ENCODE measurements at regions of chr1 and their contacts with region 1.

Region 1: DNA sequence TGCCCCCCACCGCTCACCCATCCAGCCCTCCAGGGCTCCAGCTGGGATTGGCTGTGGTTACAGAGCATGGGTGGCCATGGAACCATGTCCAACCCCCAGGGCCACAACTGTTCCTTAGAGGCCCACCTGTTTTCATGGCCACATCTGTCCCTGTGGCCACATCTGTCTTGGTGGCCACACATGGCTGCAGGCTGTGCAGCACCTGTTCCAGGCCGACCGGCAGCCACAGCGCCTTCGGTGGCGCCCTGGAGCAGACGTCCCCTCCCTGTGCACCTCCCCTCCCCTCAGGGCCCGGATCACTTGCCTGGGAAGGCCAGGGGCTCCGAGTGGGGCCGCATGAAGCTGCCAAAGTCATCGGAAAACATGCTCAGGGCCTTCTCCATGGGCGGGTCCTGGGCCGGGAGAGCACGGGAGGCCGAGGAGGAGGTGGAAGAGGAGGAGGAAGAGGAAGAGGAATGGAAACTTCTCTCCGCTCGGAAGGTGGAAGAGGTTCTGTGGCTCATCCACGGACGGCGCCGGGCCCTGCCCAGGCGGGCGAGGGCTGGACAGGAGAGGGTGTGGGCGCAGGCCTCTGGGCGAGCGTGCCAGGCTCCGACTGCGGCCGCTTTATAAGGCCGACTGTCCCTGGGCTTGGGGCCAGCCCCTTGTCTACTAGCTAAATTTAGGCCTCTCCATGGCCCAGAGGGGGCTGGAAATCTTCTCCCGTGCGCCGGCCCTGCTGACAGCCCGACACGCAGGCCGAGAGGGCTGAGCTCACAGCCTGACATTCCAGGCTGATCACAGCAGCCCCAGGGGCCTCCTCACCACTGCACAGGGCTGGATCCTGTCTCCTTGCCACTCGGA is at the start of gene HSPB7:
- DNase-seq: no peak
- H3K4me3 ChIP-seq: no peak within 1 kb of the TSS
- H3K27ac ChIP-seq: no peak within 1 kb of the TSS
- H3K4me1 ChIP-seq: no peaks in the 10 kb centered on the region
- H3K27me3 ChIP-seq: no peaks in the 10 kb centered on the region
- CTCF ChIP-seq: no peak
- total RNA-seq, gene HSPB7: not detected in 2 replicates

Region 2: GRCh38 chr1:15994590-15995351 is 22.9 kb before region 1 on chr1:
- CTCF ChIA-PET with region 1: interaction called, 12 read pairs
- POLR2A ChIA-PET with region 1: no interaction called
- intact Hi-C with region 1: no loop called
- DNase-seq: peak in 1 of 2 experiments; percentile 55
- H3K4me3 ChIP-seq: no peak overlapping the region
- H3K27ac ChIP-seq: no peak overlapping the region
- H3K4me1 ChIP-seq: no peaks in the 10 kb centered on the region
- H3K27me3 ChIP-seq: no peaks in the 10 kb centered on the region
- CTCF ChIP-seq: peak; percentile 68

Region 3: DNA sequence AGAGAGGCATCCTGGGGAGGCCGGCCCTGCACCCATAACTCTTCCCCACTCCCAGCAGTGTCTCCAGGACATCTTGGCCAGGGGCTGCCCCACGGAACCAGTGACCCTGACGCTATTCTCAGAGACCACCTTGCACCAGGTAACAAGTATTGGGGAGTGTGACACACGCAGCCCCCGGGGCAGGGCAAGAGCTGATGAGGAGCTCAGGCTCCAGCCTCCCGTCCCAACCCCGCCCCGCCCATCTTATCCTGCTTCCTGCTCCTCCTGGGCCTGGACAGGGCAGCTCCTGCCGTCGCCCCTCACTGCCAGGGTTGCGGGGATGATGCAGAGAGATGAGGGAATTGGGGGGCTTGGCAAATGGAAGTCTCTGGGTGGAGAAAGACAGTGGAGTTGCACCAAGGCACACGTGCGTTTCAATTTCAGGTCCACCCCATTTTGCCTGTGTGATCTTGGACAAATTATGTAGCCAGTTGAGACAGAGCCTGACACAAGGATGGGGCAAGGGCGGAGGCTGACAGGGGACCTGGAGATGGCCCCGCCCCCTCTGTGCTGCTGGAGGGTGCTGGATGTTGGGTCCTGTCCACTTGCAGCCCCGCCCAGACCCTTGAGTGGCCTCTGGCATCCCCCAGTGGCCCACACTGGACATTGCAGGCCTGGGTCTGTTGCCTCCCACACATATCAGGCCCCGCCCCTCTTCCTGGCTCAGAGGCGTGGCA is 14.9 kb after region 1 on chr1:
- CTCF ChIA-PET with region 1: no interaction called
- POLR2A ChIA-PET with region 1: no interaction called
- intact Hi-C with region 1: no loop called
- DNase-seq: peak; percentile 64 to 89
- H3K4me3 ChIP-seq: no peak overlapping the region
- H3K27ac ChIP-seq: no peak overlapping the region
- H3K4me1 ChIP-seq: no peaks in the 10 kb centered on the region
- H3K27me3 ChIP-seq: no peaks in the 10 kb centered on the region
- CTCF ChIP-seq: peak; percentile 86

Region 4: DNA sequence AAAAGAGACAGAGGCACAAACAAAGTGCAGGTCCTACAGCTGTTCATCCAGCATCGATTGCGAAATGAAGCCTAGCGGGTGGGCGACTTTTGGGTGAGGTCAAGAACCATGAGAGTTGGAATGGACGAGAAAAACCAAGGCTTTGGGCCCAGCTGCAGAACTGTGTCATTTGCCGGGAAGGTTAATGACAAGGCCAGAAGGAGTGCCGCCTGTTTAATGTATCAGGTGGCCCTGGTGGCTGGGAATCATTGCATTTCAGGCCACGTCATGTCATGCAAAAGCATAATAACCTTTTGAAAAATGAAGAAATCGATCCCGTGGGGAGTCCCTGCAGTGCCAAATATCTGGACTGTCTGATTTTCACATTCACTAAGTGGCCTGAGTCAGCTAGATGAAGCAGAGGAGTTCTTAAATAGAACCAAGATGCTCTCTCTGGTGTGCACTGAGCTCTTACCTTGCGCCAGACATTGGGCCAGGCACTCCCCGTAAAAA is 1429.9 kb after region 1 on chr1:
- CTCF ChIA-PET with region 1: no interaction called
- POLR2A ChIA-PET with region 1: interaction called, 10 read pairs
- intact Hi-C with region 1: no loop called
- DNase-seq: no peak
- H3K4me3 ChIP-seq: no peak overlapping the region
- H3K27ac ChIP-seq: no peak overlapping the region
- H3K4me1 ChIP-seq: peaks cover 8% of the 10 kb centered on the region
- H3K27me3 ChIP-seq: no peaks in the 10 kb centered on the region
- CTCF ChIP-seq: no peak